ENCODE measurements at regions of chr6 and their contacts with region 1.

Region 1: GRCh38 chr6:131627724-131628682 is at the start of gene MED23:
- DNase-seq: peak; percentile 88 to 95 (median 91)
- H3K4me3 ChIP-seq: peak within 1 kb of the TSS; percentile 48 to 93
- H3K4me3 Mint-ChIP-seq: peak within 1 kb of the TSS; percentile 96 to 99 (median 98)
- H3K27ac ChIP-seq: peak within 1 kb of the TSS; percentile 70
- H3K27ac Mint-ChIP-seq: peak within 1 kb of the TSS; percentile 88 to 97 (median 93)
- H3K4me1 ChIP-seq: peaks cover 26% of the 10 kb centered on the region
- H3K4me1 Mint-ChIP-seq: peaks cover 19 to 37% (median 32%) of the 10 kb centered on the region in 4 donors
- H3K27me3 ChIP-seq: no peaks in the 10 kb centered on the region
- H3K27me3 Mint-ChIP-seq: no peaks in the 10 kb centered on the region
- total RNA-seq, gene MED23: 53.7 to 56.4 TPM

Region 2: DNA sequence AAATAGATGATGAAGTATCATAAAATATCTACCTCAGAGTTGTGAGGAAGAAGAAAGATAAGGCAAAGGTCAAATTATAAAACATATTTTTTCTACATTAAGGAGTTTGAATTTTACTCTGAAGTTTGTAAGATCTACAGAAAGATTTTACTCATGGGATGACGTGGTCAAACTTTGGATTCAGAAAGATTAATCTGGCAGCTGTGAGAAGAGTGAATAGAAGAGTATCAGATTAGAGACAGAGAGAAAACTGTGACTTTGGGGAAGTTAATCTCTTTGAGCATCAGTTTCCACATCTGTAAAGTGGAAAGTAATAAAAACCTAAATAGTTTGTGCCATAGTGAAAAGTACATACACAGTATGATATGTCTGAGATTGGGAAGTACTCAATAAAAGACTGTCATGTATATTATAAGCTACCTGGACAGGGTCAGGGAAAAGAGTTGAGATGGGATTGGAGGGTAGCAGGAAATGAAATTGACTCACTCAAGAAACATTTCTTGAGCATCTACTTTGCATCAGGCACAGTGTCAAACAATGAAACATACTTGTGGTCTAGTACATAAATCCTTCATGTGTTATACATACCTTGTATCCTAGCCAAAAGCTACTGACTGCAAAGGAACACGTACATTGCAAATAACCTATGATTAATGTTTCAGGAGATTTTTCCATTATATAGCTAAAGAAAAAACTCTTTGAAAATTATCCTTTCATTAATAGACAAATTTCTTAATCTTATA is 1040.1 kb before region 1 on chr6:
- CTCF ChIA-PET with region 1: no interaction called
- POLR2A ChIA-PET with region 1: no interaction called
- intact Hi-C with region 1: no loop called
- DNase-seq: no peak
- H3K4me3 ChIP-seq: no peak overlapping the region
- H3K4me3 Mint-ChIP-seq: no peak overlapping the region
- H3K27ac ChIP-seq: no peak overlapping the region
- H3K27ac Mint-ChIP-seq: no peak overlapping the region
- H3K4me1 ChIP-seq: no peaks in the 10 kb centered on the region
- H3K4me1 Mint-ChIP-seq: peaks cover 7 to 19% (median 11%) of the 10 kb centered on the region in 4 donors
- H3K27me3 ChIP-seq: no peaks in the 10 kb centered on the region
- H3K27me3 Mint-ChIP-seq: no peaks in the 10 kb centered on the region

Region 3: DNA sequence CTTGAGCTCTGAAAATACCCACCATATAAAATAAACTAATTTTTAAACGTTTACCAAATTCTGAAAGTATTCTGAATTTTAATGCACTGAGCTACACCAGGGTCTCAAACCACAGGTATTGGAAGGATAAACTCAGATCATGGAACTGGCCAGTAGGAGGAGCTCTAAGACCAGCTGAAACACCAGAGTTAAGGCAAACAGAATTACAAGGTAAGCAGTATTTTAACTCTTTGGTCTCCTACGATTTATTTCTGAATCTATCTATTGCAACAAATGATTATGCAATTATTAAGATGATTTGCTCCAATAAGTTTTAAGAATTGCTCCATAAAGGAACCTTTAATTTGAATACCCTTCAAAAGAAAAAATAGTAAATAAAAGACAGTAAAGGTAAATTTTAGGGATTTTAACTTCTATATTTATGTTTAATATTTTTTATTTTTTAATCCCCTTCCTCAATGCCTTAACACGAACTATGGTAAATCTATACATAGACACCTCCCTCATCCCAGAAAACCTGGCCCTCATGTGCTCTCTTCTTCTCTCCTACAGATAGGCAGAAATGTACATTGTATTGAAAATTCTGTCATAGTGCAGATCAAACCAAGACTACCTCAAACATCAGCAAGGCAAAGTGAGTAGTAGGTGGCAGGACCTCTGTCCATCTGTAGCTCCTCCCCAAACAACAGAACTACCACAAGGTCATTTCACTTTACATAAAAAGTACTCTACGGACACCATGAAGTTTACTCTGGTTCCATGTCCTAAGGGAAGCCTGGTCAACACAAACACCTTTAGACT is 742.4 kb before region 1 on chr6:
- CTCF ChIA-PET with region 1: interaction called, 68 read pairs
- POLR2A ChIA-PET with region 1: no interaction called
- intact Hi-C with region 1: loop called (anchors 1 kb)
- DNase-seq: peak; percentile 72 to 79 (median 77)
- H3K4me3 ChIP-seq: no peak overlapping the region
- H3K4me3 Mint-ChIP-seq: no peak overlapping the region
- H3K27ac ChIP-seq: no peak overlapping the region
- H3K27ac Mint-ChIP-seq: no peak overlapping the region
- H3K4me1 ChIP-seq: no peaks in the 10 kb centered on the region
- H3K4me1 Mint-ChIP-seq: no peaks in the 10 kb centered on the region
- H3K27me3 ChIP-seq: no peaks in the 10 kb centered on the region
- H3K27me3 Mint-ChIP-seq: no peaks in the 10 kb centered on the region

Region 4: GRCh38 chr6:131116749-131117360 is 511.1 kb before region 1 on chr6:
- CTCF ChIA-PET with region 1: interaction called, 3 read pairs
- POLR2A ChIA-PET with region 1: no interaction called
- intact Hi-C with region 1: loop called (anchors 5 kb)
- DNase-seq: peak in 4 of 5 donors; percentile 37 to 51 (median 48)
- H3K4me3 ChIP-seq: no peak overlapping the region
- H3K4me3 Mint-ChIP-seq: no peak overlapping the region
- H3K27ac ChIP-seq: no peak overlapping the region
- H3K27ac Mint-ChIP-seq: no peak overlapping the region
- H3K4me1 ChIP-seq: no peaks in the 10 kb centered on the region
- H3K4me1 Mint-ChIP-seq: no peaks in the 10 kb centered on the region
- H3K27me3 ChIP-seq: no peaks in the 10 kb centered on the region
- H3K27me3 Mint-ChIP-seq: peaks cover 0 to 2% of the 10 kb centered on the region in 2 donors

Region 5: GRCh38 chr6:131368198-131368911 is 259.6 kb before region 1 on chr6:
- CTCF ChIA-PET with region 1: no interaction called
- POLR2A ChIA-PET with region 1: no interaction called
- intact Hi-C with region 1: no loop called
- DNase-seq: no peak
- H3K4me3 ChIP-seq: no peak overlapping the region
- H3K4me3 Mint-ChIP-seq: no peak overlapping the region
- H3K27ac ChIP-seq: no peak overlapping the region
- H3K27ac Mint-ChIP-seq: peak overlapping the region in 2 of 7 donors; percentile 7 to 22
- H3K4me1 ChIP-seq: no peaks in the 10 kb centered on the region
- H3K4me1 Mint-ChIP-seq: peaks cover 0 to 14% (median 6%) of the 10 kb centered on the region in 4 donors
- H3K27me3 ChIP-seq: no peaks in the 10 kb centered on the region
- H3K27me3 Mint-ChIP-seq: no peaks in the 10 kb centered on the region

Region 6: DNA sequence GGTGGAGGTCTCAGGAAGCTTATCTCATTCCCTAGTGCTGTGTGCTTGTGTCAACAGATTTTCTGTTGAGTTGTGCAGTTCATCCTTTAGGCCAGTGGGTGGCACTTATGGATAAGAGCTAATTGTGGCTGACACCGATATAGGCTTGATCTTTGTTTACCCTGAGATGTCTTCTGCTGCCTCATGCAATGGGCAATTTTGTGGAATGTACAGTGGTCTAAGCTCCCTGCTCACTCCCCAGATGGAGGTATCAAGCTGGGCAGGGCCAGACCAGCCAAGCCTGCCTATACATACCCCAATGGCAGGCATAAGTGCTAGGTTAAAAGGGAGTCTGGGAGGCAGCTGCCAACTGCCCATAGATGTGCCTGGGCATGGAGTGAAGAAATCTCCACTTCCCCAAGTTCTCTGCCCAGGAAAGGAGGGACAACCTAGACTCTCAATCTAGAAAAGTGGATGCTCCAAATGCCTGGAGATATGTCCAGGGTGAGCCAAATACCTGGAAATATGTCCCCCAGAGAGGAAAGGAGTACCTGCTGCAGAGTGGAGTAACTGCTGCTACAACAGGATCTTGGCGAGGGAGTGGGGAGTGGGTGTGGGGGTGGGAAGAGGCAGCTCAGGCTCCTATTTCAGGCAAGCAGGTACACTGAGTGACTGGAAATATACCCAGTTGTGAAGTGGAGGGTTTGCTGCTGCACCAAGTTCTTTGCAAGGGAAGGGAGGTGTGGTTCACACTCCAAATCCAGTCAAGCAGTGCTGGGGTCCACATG is 108.2 kb before region 1 on chr6:
- CTCF ChIA-PET with region 1: no interaction called
- POLR2A ChIA-PET with region 1: no interaction called
- intact Hi-C with region 1: loop called (anchors 2 kb)
- DNase-seq: peak; percentile 45 to 51 (median 49)
- H3K4me3 ChIP-seq: no peak overlapping the region
- H3K4me3 Mint-ChIP-seq: peak overlapping the region in 1 of 8 donors; percentile 47
- H3K27ac ChIP-seq: no peak overlapping the region
- H3K27ac Mint-ChIP-seq: peak overlapping the region in 3 of 7 donors; percentile 8 to 44 (median 33)
- H3K4me1 ChIP-seq: peaks cover 10% of the 10 kb centered on the region
- H3K4me1 Mint-ChIP-seq: peaks cover 10 to 25% (median 18%) of the 10 kb centered on the region in 4 donors
- H3K27me3 ChIP-seq: no peaks in the 10 kb centered on the region
- H3K27me3 Mint-ChIP-seq: peaks cover 0 to 2% of the 10 kb centered on the region in 2 donors

Region 7: DNA sequence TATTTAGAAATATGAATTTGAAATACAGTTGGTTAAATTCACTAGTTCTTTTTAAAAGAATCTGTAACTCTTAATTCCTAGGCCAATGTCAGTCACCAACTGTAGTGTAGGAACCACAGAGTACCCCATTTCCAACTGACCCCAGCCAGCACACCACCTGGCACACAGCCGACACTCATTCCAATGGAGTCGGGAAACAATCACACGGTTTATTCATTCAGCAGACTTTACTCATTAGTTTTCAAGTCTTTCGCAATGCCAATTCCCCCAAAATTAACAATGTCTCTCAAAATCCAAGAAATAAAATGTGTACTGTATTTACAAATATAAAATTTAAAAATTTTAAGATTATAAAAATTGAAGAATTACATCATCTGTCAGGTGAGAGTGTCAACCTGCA is 41.5 kb before region 1 on chr6:
- CTCF ChIA-PET with region 1: interaction called, 16 read pairs
- POLR2A ChIA-PET with region 1: interaction called, 3 read pairs
- intact Hi-C with region 1: no loop called
- DNase-seq: no peak
- H3K4me3 ChIP-seq: no peak overlapping the region
- H3K4me3 Mint-ChIP-seq: no peak overlapping the region
- H3K27ac ChIP-seq: no peak overlapping the region
- H3K27ac Mint-ChIP-seq: no peak overlapping the region
- H3K4me1 ChIP-seq: no peaks in the 10 kb centered on the region
- H3K4me1 Mint-ChIP-seq: no peaks in the 10 kb centered on the region
- H3K27me3 ChIP-seq: no peaks in the 10 kb centered on the region
- H3K27me3 Mint-ChIP-seq: no peaks in the 10 kb centered on the region

Region 8: DNA sequence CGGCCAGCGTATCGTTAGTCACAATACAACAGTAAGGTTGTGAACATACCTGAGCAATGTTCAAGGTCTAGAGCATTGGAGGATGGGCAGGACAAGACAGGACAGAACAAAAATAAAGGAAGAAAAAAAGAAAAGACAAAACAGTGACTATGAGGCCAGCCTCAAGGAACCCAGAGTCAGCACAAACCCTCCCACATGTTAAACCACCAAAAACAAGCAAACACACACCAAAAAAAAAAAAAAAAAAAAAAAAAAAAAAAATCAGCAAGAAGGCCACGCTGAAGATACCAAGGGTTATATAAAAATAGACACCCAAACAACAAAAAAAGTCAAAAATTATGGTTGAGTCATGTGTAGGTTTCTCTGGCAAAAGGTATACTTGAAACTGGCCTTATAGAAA is 12.7 kb before region 1 on chr6:
- CTCF ChIA-PET with region 1: interaction called, 45 read pairs
- POLR2A ChIA-PET with region 1: interaction called, 16 read pairs
- intact Hi-C with region 1: no loop called
- DNase-seq: no peak
- H3K4me3 ChIP-seq: no peak overlapping the region
- H3K4me3 Mint-ChIP-seq: no peak overlapping the region
- H3K27ac ChIP-seq: no peak overlapping the region
- H3K27ac Mint-ChIP-seq: no peak overlapping the region
- H3K4me1 ChIP-seq: no peaks in the 10 kb centered on the region
- H3K4me1 Mint-ChIP-seq: peaks cover 0 to 5% (median under 1%) of the 10 kb centered on the region in 4 donors
- H3K27me3 ChIP-seq: no peaks in the 10 kb centered on the region
- H3K27me3 Mint-ChIP-seq: no peaks in the 10 kb centered on the region

Region 9: DNA sequence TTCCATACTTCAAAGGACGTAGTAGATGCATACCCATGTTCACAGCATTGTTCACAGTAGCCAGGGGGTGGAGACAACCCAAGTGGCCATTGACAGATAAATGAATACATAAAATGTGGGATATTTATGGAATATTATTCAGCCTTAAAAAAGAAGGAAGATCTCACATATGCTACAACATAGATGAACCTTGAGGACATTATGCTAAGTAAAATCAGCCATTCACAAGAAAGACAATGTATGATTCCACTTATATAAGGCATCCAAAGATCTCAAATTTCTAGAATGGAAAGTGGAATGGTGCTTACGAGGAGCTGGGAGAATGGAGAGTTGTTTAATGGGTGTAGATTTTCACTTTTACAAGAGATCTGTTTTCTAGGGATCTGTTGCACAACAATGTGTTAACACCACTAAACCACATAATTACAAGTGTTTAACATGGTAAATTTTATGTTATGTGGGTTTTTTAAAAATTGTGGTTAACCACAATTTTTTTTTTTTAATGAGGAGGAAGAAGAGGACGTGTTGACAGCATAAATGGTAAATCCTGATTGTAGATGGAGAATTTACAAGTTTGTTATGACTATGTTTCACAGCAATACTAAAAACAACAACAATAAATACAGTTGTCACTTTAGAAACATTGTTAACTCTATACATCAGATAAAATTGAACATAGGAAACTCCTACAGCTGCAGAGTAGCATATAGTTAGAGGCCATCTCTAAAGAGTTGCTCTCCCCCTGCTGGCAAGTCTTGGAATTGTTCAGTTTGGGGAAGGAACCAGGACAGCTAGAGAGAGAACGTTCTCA is 281.6 kb after region 1 on chr6:
- CTCF ChIA-PET with region 1: interaction called, 3 read pairs
- POLR2A ChIA-PET with region 1: no interaction called
- intact Hi-C with region 1: loop called (anchors 2 kb)
- DNase-seq: peak; percentile 68 to 75 (median 73)
- H3K4me3 ChIP-seq: no peak overlapping the region
- H3K4me3 Mint-ChIP-seq: peak overlapping the region in 6 of 8 donors; percentile 21 to 79 (median 42)
- H3K27ac ChIP-seq: no peak overlapping the region
- H3K27ac Mint-ChIP-seq: peak overlapping the region in 5 of 7 donors; percentile 31 to 85 (median 74)
- H3K4me1 ChIP-seq: peaks cover 17% of the 10 kb centered on the region
- H3K4me1 Mint-ChIP-seq: peaks cover 11 to 26% (median 15%) of the 10 kb centered on the region in 4 donors
- H3K27me3 ChIP-seq: no peaks in the 10 kb centered on the region
- H3K27me3 Mint-ChIP-seq: peaks cover 10 to 16% of the 10 kb centered on the region in 2 donors